ENCODE measurements at regions of chr6 and their contacts with region 1.

Region 1: DNA sequence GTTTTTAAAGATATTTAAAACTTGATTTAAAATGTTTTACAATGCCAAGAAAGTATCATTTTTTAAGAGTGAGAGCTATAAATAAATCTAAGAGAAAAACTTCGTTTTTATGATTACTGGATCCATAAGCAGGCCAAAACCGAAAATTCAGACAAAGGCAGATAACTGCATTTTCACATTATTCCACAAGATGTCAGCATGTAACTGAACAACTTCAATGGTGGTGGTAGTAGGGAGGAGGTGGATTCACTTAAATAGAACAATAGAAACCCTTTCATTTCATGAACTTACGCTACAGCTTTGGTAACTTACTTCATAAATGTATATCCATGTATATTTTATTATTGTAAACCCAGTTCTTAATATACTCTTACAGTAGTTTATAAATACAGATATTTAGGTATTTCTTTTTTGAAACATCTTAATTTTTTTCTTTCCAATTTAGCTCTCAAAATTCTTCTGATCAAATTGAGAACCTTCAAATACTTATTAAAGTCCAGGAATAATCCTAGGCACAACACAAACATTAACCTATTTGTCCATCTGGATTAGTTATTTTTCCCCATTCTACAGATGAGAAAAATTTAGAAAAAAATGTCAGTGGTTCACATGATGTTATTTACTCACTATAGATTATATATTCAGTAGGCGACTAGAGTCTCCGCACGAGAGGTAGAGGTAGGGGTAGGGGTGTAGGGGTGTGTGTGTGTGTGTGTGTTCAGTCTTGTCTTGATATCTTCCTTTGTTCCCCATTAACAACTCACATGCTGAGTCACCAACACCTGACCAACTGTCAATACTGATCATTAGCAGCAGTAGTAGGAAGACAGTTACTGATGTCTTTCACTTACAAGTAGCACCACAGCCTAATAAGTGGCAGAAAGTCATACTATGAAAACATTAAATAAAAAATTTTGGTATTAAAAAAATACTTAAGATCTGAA is 111.5 kb downstream of the ARHGAP18 start:
- DNase-seq: no peak
- ATAC-seq: peak; percentile 75 to 76
- H3K4me3 ChIP-seq: no peak overlapping the region
- H3K27ac ChIP-seq: no peak overlapping the region
- H3K4me1 ChIP-seq: no peaks in the 10 kb centered on the region
- H3K27me3 ChIP-seq: no peaks in the 10 kb centered on the region

Region 2: GRCh38 chr6:129730477-129731165 is 132.1 kb after region 1 on chr6:
- intact Hi-C with region 1: loop called in 2 of 4 experiments (anchors 5 kb)
- DNase-seq: no peak
- ATAC-seq: no peak
- H3K4me3 ChIP-seq: no peak overlapping the region
- H3K27ac ChIP-seq: no peak overlapping the region
- H3K4me1 ChIP-seq: no peaks in the 10 kb centered on the region
- H3K27me3 ChIP-seq: no peaks in the 10 kb centered on the region

Region 3: DNA sequence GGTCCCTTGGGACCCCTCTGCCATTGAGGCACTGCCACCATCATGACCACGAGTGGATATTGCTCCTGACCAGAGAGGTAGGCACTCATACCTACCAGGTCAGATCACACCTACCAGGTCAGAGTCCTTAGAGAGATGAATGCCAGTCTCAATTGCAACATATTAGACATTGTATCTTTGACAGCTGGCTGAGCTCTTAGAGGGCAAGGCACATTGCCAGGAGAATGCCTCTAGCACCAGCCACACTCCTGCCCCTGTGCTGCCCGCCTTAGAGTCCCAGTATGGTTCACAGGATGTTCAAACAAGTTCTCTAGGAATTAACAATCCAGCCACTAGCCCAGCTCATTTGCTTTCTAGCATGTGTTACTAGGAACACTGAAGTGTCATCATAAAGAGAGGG is 196.7 kb after region 1 on chr6:
- intact Hi-C with region 1: no loop called
- DNase-seq: no peak
- ATAC-seq: no peak
- H3K4me3 ChIP-seq: no peak overlapping the region
- H3K27ac ChIP-seq: no peak overlapping the region
- H3K4me1 ChIP-seq: no peaks in the 10 kb centered on the region
- H3K27me3 ChIP-seq: no peaks in the 10 kb centered on the region

Region 4: GRCh38 chr6:130020907-130021629 is 422.6 kb after region 1 on chr6:
- intact Hi-C with region 1: loop called in 3 of 4 experiments (anchors 10 kb)
- DNase-seq: peak; percentile 73 to 85 (median 83)
- ATAC-seq: peak; percentile 86 to 89
- H3K4me3 ChIP-seq: peak overlapping the region; percentile 99
- H3K27ac ChIP-seq: peak overlapping the region; percentile 72
- H3K4me1 ChIP-seq: no peaks in the 10 kb centered on the region
- H3K27me3 ChIP-seq: no peaks in the 10 kb centered on the region

Measured in right cardiac atrium (tissue), 5 donors.